Activated CD4-positive, alpha-beta T cell treated with anti-CD3 and anti-CD28 coated beads, Interleukin-2, amount 10 ng/mL, durations not matched to agents 24 days and 14 days (primary cell): ENCODE measurements at regions of chr16 and their contacts with region 1.

Region 1: GRCh38 chr16:8943966-8944759 is 19.5 kb downstream of the USP7 start:
- DNase-seq: no peak
- H3K4me3 Mint-ChIP-seq: peak overlapping the region; percentile 66
- H3K27ac Mint-ChIP-seq: peak overlapping the region; percentile 72
- H3K4me1 Mint-ChIP-seq: peaks cover 65% of the 10 kb centered on the region
- H3K27me3 Mint-ChIP-seq: no peaks in the 10 kb centered on the region

Region 2: DNA sequence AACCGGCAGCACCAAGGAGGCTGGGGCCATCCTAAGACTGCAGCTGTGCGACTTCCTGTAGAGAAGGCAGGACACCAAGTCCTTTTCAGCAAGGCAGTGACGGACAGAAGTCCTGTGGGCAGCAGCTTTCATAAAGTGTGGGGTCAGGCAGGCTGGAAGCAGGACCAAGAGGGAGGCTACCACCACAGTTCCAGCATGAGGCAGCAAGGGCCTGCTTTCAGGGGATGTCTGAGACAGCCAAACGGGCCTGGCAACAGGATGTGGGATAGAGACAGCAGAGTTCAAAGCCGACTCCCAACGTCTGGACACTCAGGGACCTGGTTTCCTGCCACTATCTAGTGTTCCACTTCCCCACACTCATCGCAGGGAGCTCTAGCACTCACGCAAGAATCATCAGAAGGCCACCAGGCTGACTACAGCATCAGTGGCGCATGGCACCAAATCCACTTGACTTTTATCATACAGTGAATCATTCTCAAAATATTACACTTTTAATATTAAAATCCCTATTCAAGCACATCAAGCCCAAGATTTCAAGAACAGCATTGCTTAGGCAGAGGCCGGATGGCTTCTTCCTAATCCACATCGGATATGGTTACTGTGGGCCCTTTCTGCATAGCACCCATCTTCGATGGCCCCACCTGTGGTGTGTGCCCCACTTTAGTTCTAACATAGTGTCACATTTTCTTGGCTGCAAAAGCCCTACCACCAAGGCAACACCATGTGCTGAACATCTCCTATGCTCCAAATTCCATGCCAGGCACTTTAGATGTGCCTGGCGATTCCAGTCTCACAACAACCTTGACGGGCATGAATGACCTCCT is 14.4 kb after region 1 on chr16:
- intact Hi-C with region 1: loop called (anchors 2 kb)
- DNase-seq: peak; percentile 77
- H3K4me3 Mint-ChIP-seq: peak overlapping the region; percentile 94
- H3K27ac Mint-ChIP-seq: peak overlapping the region; percentile 88
- H3K4me1 Mint-ChIP-seq: peaks cover 70% of the 10 kb centered on the region
- H3K27me3 Mint-ChIP-seq: no peaks in the 10 kb centered on the region

Region 3: DNA sequence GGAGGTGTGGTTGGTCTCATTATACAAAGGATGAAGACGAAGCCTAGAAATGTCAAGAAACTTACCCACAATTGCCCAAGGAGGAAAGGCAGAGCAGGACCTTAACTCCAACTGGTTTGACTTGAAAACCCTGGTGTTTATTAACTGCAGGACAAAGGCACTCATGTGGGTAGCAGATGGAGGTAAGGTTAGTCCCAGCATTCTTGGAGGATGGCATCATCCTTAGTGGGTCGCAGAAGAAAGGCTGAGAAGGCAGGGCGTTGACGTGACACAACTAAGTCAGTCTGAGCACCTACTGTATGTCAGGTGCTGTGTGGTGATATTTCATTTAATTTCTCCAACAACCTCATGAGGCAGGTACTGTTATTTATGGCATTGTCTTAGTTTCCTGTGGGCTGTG is 248.6 kb after region 1 on chr16:
- intact Hi-C with region 1: no loop called
- DNase-seq: no peak
- H3K4me3 Mint-ChIP-seq: no peak overlapping the region
- H3K27ac Mint-ChIP-seq: no peak overlapping the region
- H3K4me1 Mint-ChIP-seq: no peaks in the 10 kb centered on the region
- H3K27me3 Mint-ChIP-seq: no peaks in the 10 kb centered on the region